SK-N-SH (cell line): ENCODE measurements at regions of chr5 and their contacts with region 1.

Region 1: DNA sequence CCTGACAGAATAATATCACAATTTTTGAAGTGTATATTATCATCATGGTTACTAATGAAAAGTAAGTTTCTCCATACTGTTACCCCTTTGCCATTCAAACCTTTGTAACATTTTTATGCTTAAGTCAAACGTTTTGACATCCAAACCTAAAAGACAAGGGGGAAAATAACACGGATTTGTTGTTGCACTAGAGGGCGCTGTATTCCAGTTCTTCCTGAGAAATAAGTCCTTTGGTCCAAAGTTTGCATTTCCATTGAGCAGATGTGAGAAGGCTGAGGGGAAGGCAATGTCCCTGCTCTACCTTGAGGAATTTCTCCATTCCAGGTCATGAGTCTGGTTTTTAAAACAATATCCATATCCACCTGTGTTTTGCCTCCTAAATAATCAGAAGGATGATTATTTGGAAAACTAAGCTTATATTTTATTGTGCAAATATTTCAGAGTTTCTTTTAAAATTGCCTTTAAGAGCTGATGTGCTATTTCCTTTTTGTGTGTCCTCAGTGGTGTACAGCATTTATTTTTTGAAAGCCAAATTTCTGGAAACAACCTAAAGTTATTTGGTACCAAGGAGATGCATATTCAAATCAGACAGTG is 9.7 kb downstream of the LECT2 start:
- DNase-seq: peak; percentile 66
- H3K4me3 ChIP-seq: no peak overlapping the region
- H3K27ac ChIP-seq: peak overlapping the region; percentile 35 to 47; a peak in 2 of 4 replicates
- H3K4me1 ChIP-seq: no peaks in the 10 kb centered on the region
- H3K27me3 ChIP-seq: no peaks in the 10 kb centered on the region
- CTCF ChIP-seq: peak; percentile 86
- EP300 ChIP-seq: no peak
- RAD21 ChIP-seq: peak; percentile 96

Region 2: GRCh38 chr5:135829681-135830383 is 115.2 kb before region 1 on chr5:
- CTCF ChIA-PET with region 1: no interaction called
- POLR2A ChIA-PET with region 1: no interaction called
- DNase-seq: peak; percentile 82
- H3K4me3 ChIP-seq: peak overlapping the region in 1 of 2 experiments; percentile 54; a peak in 1 of 4 replicates
- H3K27ac ChIP-seq: no peak overlapping the region
- H3K4me1 ChIP-seq: no peaks in the 10 kb centered on the region; a peak in 1 of 4 replicates
- H3K27me3 ChIP-seq: peaks cover 32% of the 10 kb centered on the region
- CTCF ChIP-seq: peak; percentile 90
- EP300 ChIP-seq: no peak
- RAD21 ChIP-seq: peak; percentile 84

Region 3: GRCh38 chr5:136062366-136063274 is 117.6 kb after region 1 on chr5:
- CTCF ChIA-PET with region 1: interaction called, 10 read pairs
- POLR2A ChIA-PET with region 1: no interaction called
- DNase-seq: no peak
- H3K4me3 ChIP-seq: no peak overlapping the region
- H3K27ac ChIP-seq: peak overlapping the region in 1 of 2 experiments; percentile 17; a peak in 1 of 4 replicates
- H3K4me1 ChIP-seq: peaks cover 7 to 12% of the 10 kb centered on the region in 2 experiments; a peak in 3 of 4 replicates
- H3K27me3 ChIP-seq: no peaks in the 10 kb centered on the region
- CTCF ChIP-seq: peak; percentile 60
- EP300 ChIP-seq: no peak
- RAD21 ChIP-seq: peak; percentile 74

Region 4: GRCh38 chr5:136174021-136174659 is 229.1 kb after region 1 on chr5:
- CTCF ChIA-PET with region 1: interaction called, 15 read pairs
- POLR2A ChIA-PET with region 1: no interaction called
- DNase-seq: peak; percentile 48
- H3K4me3 ChIP-seq: no peak overlapping the region; a peak in 1 of 4 replicates
- H3K27ac ChIP-seq: peak overlapping the region in 1 of 2 experiments; percentile 43; a peak in 1 of 4 replicates
- H3K4me1 ChIP-seq: peaks cover 0 to 2% of the 10 kb centered on the region in 2 experiments; a peak in 1 of 4 replicates
- H3K27me3 ChIP-seq: no peaks in the 10 kb centered on the region
- CTCF ChIP-seq: peak; percentile 76
- EP300 ChIP-seq: 0 out of 4 replicates have a peak, but pooled peaks of 1 of the 2 experiments have one; percentile 12
- RAD21 ChIP-seq: peak; percentile 79